ENCODE measurements at regions of chr13 and their contacts with region 1.

Region 1: GRCh38 chr13:106958621-106959048 is 390.7 kb upstream of the ARGLU1 start:
- DNase-seq: peak; percentile 69 to 82
- H3K4me3 ChIP-seq: no peak overlapping the region
- H3K4me3 Mint-ChIP-seq: peak overlapping the region; percentile 65
- H3K27ac Mint-ChIP-seq: peak overlapping the region; percentile 92
- H3K4me1 ChIP-seq: peaks cover 69% of the 10 kb centered on the region
- H3K4me1 Mint-ChIP-seq: peaks cover 50% of the 10 kb centered on the region
- H3K27me3 ChIP-seq: no peaks in the 10 kb centered on the region
- H3K27me3 Mint-ChIP-seq: no peaks in the 10 kb centered on the region
- CTCF ChIP-seq: no peak

Region 2: GRCh38 chr13:106567474-106568298 is 390.9 kb before region 1 on chr13 and contains the start of gene ARGLU1:
- CTCF ChIA-PET with region 1: interaction called, 3 read pairs
- POLR2A ChIA-PET with region 1: no interaction called
- intact Hi-C with region 1: loop called (anchors 2 kb)
- DNase-seq: peak; percentile 93 to 97
- H3K4me3 ChIP-seq: peak within 1 kb of the TSS; percentile 93
- H3K4me3 Mint-ChIP-seq: peak within 1 kb of the TSS; percentile 87
- H3K27ac Mint-ChIP-seq: peak within 1 kb of the TSS; percentile 95
- H3K4me1 ChIP-seq: peaks cover 41% of the 10 kb centered on the region
- H3K4me1 Mint-ChIP-seq: peaks cover 16% of the 10 kb centered on the region
- H3K27me3 ChIP-seq: no peaks in the 10 kb centered on the region
- H3K27me3 Mint-ChIP-seq: no peaks in the 10 kb centered on the region
- CTCF ChIP-seq: no peak
- total RNA-seq, gene ARGLU1: 127 and 137 TPM in 2 replicates

Region 3: DNA sequence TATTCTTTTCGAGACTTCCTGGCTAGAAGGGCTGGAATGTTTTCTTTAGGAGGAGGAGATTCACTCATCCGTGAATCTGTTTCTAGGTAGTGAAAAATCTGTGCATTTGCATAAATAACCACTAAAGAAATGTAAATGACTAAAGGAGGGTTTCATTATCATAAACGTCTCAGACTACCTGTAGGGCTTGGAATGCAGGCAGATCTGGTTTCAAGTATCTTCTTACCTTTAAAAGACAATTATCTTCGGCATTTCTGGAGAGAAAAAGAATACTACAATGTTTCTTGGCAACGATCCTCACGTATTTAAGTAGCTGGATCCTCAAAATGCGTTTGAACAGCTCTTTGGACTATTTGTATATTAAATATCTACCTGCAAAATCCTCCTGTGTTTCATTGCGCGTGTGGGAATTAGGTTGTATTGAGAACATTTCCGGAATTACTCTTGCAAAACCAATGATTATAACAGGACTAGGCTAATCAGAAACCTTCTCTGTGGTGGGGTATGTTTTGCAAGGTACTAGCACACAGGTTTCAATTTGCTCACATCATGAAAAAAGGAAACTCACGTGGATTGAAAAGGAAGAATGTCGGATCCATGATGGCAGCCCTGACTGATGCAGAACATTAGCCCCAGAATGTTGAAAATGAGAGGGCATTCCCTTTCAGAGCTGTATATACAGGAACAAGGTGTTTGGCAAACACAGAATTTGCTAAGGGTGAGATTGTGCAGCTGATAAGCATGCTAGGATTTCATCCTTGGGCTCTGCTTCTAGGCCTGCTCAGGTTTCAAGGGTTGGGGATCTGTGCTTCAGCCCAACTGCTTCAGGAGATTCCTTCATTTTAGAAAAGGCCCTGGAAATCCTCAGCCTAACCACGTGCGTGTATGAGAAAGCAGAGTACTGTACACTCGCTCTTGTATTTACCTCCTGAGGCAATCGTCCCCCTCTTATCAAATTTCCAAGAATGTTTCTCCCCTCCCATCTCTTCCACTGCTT is 99.4 kb before region 1 on chr13:
- CTCF ChIA-PET with region 1: no interaction called
- POLR2A ChIA-PET with region 1: no interaction called
- intact Hi-C with region 1: loop called (anchors 1 kb)
- DNase-seq: peak; percentile 63 to 75
- H3K4me3 ChIP-seq: no peak overlapping the region
- H3K4me3 Mint-ChIP-seq: peak overlapping the region; percentile 41
- H3K27ac Mint-ChIP-seq: peak overlapping the region; percentile 80
- H3K4me1 ChIP-seq: peaks cover 44% of the 10 kb centered on the region
- H3K4me1 Mint-ChIP-seq: peaks cover 23% of the 10 kb centered on the region
- H3K27me3 ChIP-seq: no peaks in the 10 kb centered on the region
- H3K27me3 Mint-ChIP-seq: no peaks in the 10 kb centered on the region
- CTCF ChIP-seq: no peak

Region 4: DNA sequence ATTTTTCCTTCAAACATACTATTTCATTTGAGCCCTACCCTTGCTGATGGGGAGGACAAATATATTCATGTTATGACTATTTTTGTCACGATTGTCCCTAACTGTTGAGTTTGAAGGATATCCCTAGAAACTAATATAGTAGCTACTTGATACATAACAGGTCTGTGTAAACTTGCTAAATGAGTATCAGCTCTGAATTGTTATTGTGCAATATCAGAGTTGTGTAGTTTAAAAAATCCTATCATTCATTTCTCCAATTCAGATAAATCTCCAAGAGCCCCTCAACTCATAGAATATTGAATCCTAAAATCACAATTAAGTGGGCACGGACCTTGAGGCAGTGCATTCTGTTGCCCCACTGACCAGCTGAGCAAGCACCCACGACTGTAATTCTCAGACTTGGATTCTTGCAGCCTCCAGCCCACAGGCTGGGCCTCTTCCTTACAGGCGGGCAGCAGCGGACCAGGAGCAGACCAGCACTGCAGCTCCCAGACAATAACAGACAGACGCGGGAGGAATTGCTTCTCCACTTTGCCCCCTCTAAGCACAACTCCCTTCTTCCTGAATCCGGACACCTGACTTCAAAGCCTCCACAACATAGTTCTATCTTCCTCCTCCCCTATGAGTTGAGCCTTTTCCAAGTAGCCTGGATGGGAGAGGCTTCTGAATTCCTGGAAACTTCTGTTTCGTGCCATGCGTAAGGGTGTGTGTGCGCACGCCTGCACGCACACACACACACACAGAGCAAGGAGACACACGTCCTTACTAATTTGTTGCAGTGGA is 53.1 kb before region 1 on chr13:
- CTCF ChIA-PET with region 1: no interaction called
- POLR2A ChIA-PET with region 1: no interaction called
- intact Hi-C with region 1: no loop called
- DNase-seq: no peak
- H3K4me3 ChIP-seq: no peak overlapping the region
- H3K4me3 Mint-ChIP-seq: no peak overlapping the region
- H3K27ac Mint-ChIP-seq: no peak overlapping the region
- H3K4me1 ChIP-seq: no peaks in the 10 kb centered on the region
- H3K4me1 Mint-ChIP-seq: peaks cover 6% of the 10 kb centered on the region
- H3K27me3 ChIP-seq: no peaks in the 10 kb centered on the region
- H3K27me3 Mint-ChIP-seq: no peaks in the 10 kb centered on the region
- CTCF ChIP-seq: no peak

Region 5: GRCh38 chr13:106996867-106997618 is 38.4 kb after region 1 on chr13:
- CTCF ChIA-PET with region 1: interaction called, 4 read pairs
- POLR2A ChIA-PET with region 1: no interaction called
- intact Hi-C with region 1: loop called (anchors 1 kb)
- DNase-seq: peak; percentile 63 to 76
- H3K4me3 ChIP-seq: no peak overlapping the region
- H3K4me3 Mint-ChIP-seq: peak overlapping the region; percentile 32
- H3K27ac Mint-ChIP-seq: peak overlapping the region; percentile 50
- H3K4me1 ChIP-seq: peaks cover 21% of the 10 kb centered on the region
- H3K4me1 Mint-ChIP-seq: peaks cover 27% of the 10 kb centered on the region
- H3K27me3 ChIP-seq: no peaks in the 10 kb centered on the region
- H3K27me3 Mint-ChIP-seq: no peaks in the 10 kb centered on the region
- CTCF ChIP-seq: no peak

Region 6: GRCh38 chr13:107018285-107018684 is 59.6 kb after region 1 on chr13:
- CTCF ChIA-PET with region 1: no interaction called
- POLR2A ChIA-PET with region 1: no interaction called
- intact Hi-C with region 1: loop called (anchors 1 kb)
- DNase-seq: peak in 1 of 2 experiments; percentile 33
- H3K4me3 ChIP-seq: no peak overlapping the region
- H3K4me3 Mint-ChIP-seq: peak overlapping the region; percentile 17
- H3K27ac Mint-ChIP-seq: peak overlapping the region; percentile 21
- H3K4me1 ChIP-seq: peaks cover 32% of the 10 kb centered on the region
- H3K4me1 Mint-ChIP-seq: peaks cover 21% of the 10 kb centered on the region
- H3K27me3 ChIP-seq: no peaks in the 10 kb centered on the region
- H3K27me3 Mint-ChIP-seq: no peaks in the 10 kb centered on the region
- CTCF ChIP-seq: no peak

Region 7: GRCh38 chr13:107166258-107166657 is 207.6 kb after region 1 on chr13:
- CTCF ChIA-PET with region 1: no interaction called
- POLR2A ChIA-PET with region 1: no interaction called
- intact Hi-C with region 1: no loop called
- DNase-seq: no peak
- H3K4me3 ChIP-seq: no peak overlapping the region
- H3K4me3 Mint-ChIP-seq: no peak overlapping the region
- H3K27ac Mint-ChIP-seq: no peak overlapping the region
- H3K4me1 ChIP-seq: no peaks in the 10 kb centered on the region
- H3K4me1 Mint-ChIP-seq: no peaks in the 10 kb centered on the region
- H3K27me3 ChIP-seq: no peaks in the 10 kb centered on the region
- H3K27me3 Mint-ChIP-seq: peaks cover 8% of the 10 kb centered on the region
- CTCF ChIP-seq: no peak